ENCODE measurements at regions of chr15 and their contacts with region 1.

Region 1: GRCh38 chr15:78131295-78132061 is at the start of gene CIB2:
- DNase-seq: peak; percentile 35 to 54
- ATAC-seq: peak; percentile 71 to 72
- H3K4me3 ChIP-seq: peak within 1 kb of the TSS; percentile 65 to 98 (median 70)
- H3K27ac ChIP-seq: peak within 1 kb of the TSS; percentile 69 to 83 (median 75)
- H3K4me1 ChIP-seq: peaks cover 21 to 22% of the 10 kb centered on the region in 2 donors
- H3K27me3 ChIP-seq: no peaks in the 10 kb centered on the region
- CTCF ChIP-seq: peak; percentile 60 to 95 (median 93)
- POLR2A ChIP-seq: no peak
- total RNA-seq, gene CIB2: 5.6 to 14.4 (median 6.7) TPM

Region 2: GRCh38 chr15:78149068-78149804 is 17.8 kb after region 1 on chr15 and contains the start of gene IDH3A:
- in situ Hi-C with region 1: no loop called
- intact Hi-C with region 1: loop called (anchors 1 kb)
- DNase-seq: peak; percentile 97 to 98
- ATAC-seq: peak; percentile 81 to 90
- H3K4me3 ChIP-seq: peak within 1 kb of the TSS; percentile 65 to 85 (median 73)
- H3K27ac ChIP-seq: peak within 1 kb of the TSS; percentile 86 to 96 (median 92)
- H3K4me1 ChIP-seq: peaks cover 47 to 53% of the 10 kb centered on the region in 2 donors
- H3K27me3 ChIP-seq: no peaks in the 10 kb centered on the region
- CTCF ChIP-seq: no peak
- POLR2A ChIP-seq: peak; percentile 96 to 97
- total RNA-seq, gene IDH3A: 133 to 202 (median 168) TPM

Region 3: GRCh38 chr15:78177447-78177873 is 46.0 kb after region 1 on chr15:
- in situ Hi-C with region 1: no loop called
- intact Hi-C with region 1: loop called (anchors 5 kb)
- DNase-seq: peak in 1 of 2 donors; percentile 33
- ATAC-seq: no peak
- H3K4me3 ChIP-seq: no peak overlapping the region
- H3K27ac ChIP-seq: no peak overlapping the region
- H3K4me1 ChIP-seq: peaks cover 0 to 2% of the 10 kb centered on the region in 2 donors
- H3K27me3 ChIP-seq: no peaks in the 10 kb centered on the region
- CTCF ChIP-seq: peak; percentile 59 to 80 (median 64)
- POLR2A ChIP-seq: no peak

Region 4: DNA sequence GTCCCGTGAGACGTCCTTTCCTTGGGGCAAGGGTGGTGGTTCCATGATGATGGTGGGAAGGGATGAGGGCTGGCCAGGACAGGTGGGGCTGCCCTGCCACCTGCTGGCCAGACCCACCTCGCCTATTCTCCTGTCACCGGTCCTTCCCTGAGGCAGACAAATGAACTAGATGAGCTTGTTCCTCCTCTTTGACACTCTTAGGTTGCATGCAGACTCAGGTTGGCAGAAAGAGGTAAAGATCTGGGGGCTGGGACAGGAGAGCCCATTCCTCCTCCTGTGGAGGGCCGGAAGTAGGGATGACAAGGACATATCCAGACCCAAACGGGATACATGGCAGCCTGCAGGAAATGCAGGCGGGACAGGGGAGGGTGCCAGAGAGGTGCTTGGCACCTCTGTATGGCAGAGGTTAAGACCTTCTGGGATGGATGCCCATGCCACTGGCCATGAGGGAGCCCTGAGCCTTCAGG is 64.3 kb after region 1 on chr15:
- in situ Hi-C with region 1: no loop called
- intact Hi-C with region 1: loop called (anchors 2 kb)
- DNase-seq: no peak
- ATAC-seq: peak; percentile 67 to 77
- H3K4me3 ChIP-seq: no peak overlapping the region
- H3K27ac ChIP-seq: no peak overlapping the region
- H3K4me1 ChIP-seq: no peaks in the 10 kb centered on the region
- H3K27me3 ChIP-seq: no peaks in the 10 kb centered on the region
- CTCF ChIP-seq: peak; percentile 72 to 81 (median 77)
- POLR2A ChIP-seq: no peak

Region 5: GRCh38 chr15:78340231-78341056 is 209.0 kb after region 1 on chr15 and contains the start of gene CRABP1:
- in situ Hi-C with region 1: no loop called
- intact Hi-C with region 1: no loop called
- DNase-seq: no peak
- ATAC-seq: no peak
- H3K4me3 ChIP-seq: peak within 1 kb of the TSS in 1 of 4 donors; percentile 10
- H3K27ac ChIP-seq: no peak within 1 kb of the TSS
- H3K4me1 ChIP-seq: peaks cover 7 to 8% of the 10 kb centered on the region in 2 donors
- H3K27me3 ChIP-seq: peaks cover 43 to 53% (median 44%) of the 10 kb centered on the region in 3 donors
- CTCF ChIP-seq: no peak
- POLR2A ChIP-seq: no peak
- total RNA-seq, gene CRABP1: not detected

Measured in gastrocnemius medialis (tissue), 4 donors.